PC-9 (cell line): ENCODE measurements at regions of chr1 and their contacts with region 1.

Region 1: GRCh38 chr1:212455803-212456528 is 23.2 kb downstream of the NENF start:
- DNase-seq: peak; percentile 55 to 80
- H3K4me3 ChIP-seq: no peak overlapping the region
- H3K27ac ChIP-seq: no peak overlapping the region
- H3K4me1 ChIP-seq: no peaks in the 10 kb centered on the region
- H3K27me3 ChIP-seq: no peaks in the 10 kb centered on the region
- CTCF ChIP-seq: peak; percentile 95

Region 2: DNA sequence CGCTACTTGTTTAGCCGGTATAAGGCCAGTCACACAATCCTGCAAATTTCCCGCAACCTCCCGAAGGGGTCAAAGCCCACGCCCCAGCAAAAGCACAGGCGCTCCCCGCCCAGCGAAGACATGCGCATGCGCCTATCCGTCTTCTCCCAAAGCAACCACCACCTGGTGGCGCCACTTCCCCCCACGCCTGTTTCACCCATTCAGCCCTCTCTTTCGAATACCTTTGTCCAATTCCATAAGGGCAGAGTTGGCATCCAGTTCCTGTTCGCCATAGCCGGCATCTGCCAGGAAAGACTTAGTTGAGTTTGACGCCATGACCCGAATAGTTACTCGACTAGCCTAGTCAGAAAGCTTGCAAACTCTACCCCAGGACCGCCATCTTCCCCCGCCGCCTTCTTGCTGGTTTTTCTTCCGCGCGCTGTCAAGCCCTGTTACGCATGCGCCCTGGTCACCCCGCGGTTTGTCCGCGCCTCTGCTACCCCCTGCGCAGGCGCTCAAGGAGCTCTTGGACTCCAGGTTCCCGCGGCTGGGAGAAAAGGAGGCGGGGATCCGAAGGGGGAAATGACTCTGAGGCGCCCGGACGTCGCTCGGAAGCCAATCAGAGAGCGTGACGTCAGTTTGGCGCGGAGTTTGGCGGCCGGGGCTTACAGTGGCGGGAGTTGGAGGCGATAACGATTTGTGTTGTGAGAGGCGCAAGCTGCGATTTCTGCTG is 420.7 kb before region 1 on chr1 and contains the starts of genes DTL and INTS7:
- CTCF ChIA-PET with region 1: interaction called, 8 read pairs
- POLR2A ChIA-PET with region 1: no interaction called
- intact Hi-C with region 1: loop called (anchors 10 kb)
- DNase-seq: peak; percentile 97 to 98
- H3K4me3 ChIP-seq: peak within 1 kb of the TSS; percentile 93
- H3K27ac ChIP-seq: peak within 1 kb of the TSS; percentile 55
- H3K4me1 ChIP-seq: peaks cover 50% of the 10 kb centered on the region
- H3K27me3 ChIP-seq: no peaks in the 10 kb centered on the region
- CTCF ChIP-seq: peak; percentile 81
- total RNA-seq, gene DTL: 22.5 TPM in 2 replicates
- total RNA-seq, gene INTS7: 18.4 and 24.7 TPM in 2 replicates

Region 3: GRCh38 chr1:212110617-212111016 is 345.3 kb before region 1 on chr1:
- CTCF ChIA-PET with region 1: no interaction called
- POLR2A ChIA-PET with region 1: no interaction called
- intact Hi-C with region 1: no loop called
- DNase-seq: no peak
- H3K4me3 ChIP-seq: no peak overlapping the region
- H3K27ac ChIP-seq: no peak overlapping the region
- H3K4me1 ChIP-seq: no peaks in the 10 kb centered on the region
- H3K27me3 ChIP-seq: no peaks in the 10 kb centered on the region
- CTCF ChIP-seq: no peak

Region 4: GRCh38 chr1:212368073-212368484 is 87.9 kb before region 1 on chr1:
- CTCF ChIA-PET with region 1: interaction called, 6 read pairs
- POLR2A ChIA-PET with region 1: no interaction called
- intact Hi-C with region 1: loop called (anchors 5 kb)
- DNase-seq: peak; percentile 41 to 67
- H3K4me3 ChIP-seq: no peak overlapping the region
- H3K27ac ChIP-seq: no peak overlapping the region
- H3K4me1 ChIP-seq: no peaks in the 10 kb centered on the region
- H3K27me3 ChIP-seq: no peaks in the 10 kb centered on the region
- CTCF ChIP-seq: peak; percentile 87

Region 5: DNA sequence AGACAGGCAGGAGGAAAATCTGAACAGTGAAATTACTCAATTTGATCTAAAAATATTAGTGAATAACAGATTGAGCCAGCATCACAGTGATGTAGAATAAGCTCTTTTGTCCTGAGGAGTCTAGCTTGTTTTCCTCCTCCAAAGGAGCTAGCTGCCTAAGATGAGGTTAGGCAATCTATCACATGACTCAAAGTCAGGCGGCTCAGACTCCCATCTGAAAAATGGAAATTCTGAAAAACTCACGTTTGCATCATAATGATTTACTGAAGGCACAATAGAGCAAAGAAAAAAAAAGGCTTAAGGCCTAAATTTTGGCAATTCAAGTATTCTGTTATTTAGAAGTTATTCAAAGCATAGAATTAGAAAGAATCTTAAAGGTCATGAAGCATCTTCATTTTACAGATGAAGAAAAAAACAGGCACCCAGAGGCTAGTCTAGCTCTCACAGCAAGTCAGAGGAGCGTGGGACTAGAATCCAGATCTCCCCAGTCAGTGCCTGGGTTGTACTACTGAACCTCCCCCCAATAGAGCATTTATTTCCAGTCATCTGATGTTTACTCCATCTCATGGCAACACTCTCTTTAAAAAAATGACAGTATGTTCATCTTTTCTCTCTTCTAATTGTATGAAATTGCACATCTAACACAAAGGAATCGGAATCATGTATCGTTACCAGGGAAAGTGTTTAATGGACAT is 90.1 kb after region 1 on chr1:
- CTCF ChIA-PET with region 1: no interaction called
- POLR2A ChIA-PET with region 1: no interaction called
- intact Hi-C with region 1: no loop called
- DNase-seq: no peak
- H3K4me3 ChIP-seq: no peak overlapping the region
- H3K27ac ChIP-seq: no peak overlapping the region
- H3K4me1 ChIP-seq: no peaks in the 10 kb centered on the region
- H3K27me3 ChIP-seq: no peaks in the 10 kb centered on the region
- CTCF ChIP-seq: no peak

Region 6: DNA sequence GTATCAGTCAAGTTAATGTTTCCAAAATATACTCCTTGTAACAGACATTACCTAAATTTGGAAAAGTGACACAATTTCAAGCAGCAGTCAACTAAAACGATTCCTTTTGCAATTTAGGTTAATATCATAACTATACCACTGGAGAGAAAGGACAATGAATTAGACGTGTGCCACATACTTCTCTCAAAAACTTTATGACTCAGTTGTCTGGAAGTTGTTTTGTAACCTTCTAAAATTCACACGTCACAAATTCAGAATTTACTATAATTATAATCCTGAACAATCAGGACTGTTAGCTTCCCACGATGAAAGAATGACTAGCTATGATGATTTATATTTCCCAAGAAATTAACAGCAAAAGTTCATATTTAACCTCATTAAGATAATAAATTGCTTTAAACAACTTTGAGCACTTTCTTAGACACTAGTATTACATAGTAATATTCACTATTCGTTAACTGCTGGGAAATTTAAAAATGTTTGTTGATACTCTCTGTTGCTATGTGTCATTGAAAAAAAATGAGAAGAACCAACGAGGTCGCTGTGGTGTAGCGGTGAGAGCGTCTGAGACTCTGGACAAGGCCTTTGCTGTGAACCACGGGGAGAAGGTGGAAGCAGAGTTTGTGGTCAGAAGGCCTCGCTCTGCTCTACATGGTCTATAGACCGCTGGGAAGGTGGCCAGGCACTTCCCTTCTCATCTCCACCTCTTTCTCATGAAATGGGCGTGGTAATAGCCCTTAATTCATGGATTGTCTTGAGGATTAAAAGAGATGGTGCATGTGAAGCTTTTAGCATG is 271.6 kb after region 1 on chr1:
- CTCF ChIA-PET with region 1: interaction called, 13 read pairs
- POLR2A ChIA-PET with region 1: no interaction called
- intact Hi-C with region 1: no loop called
- DNase-seq: no peak
- H3K4me3 ChIP-seq: no peak overlapping the region
- H3K27ac ChIP-seq: no peak overlapping the region
- H3K4me1 ChIP-seq: no peaks in the 10 kb centered on the region
- H3K27me3 ChIP-seq: no peaks in the 10 kb centered on the region
- CTCF ChIP-seq: no peak

Region 7: DNA sequence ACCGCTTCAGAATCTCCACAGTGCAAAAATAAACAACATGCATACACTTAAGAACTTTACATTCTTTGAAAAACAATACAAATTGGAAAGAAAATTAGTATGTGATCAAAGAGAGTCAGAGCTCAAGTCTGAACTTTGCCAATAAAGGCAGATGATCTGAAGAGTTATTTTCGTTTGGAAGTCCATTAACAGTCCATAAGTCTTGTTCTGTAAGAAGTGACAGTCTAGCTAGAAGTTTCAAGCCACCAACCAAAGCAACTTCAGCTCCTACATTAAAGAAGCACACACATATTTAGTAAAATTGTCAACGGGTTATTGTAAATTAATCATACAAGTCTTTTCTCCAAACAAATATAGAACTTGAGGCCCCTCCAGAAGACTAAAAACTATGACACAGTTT is 539.0 kb after region 1 on chr1:
- CTCF ChIA-PET with region 1: no interaction called
- POLR2A ChIA-PET with region 1: no interaction called
- intact Hi-C with region 1: loop called (anchors 1 kb)
- DNase-seq: no peak
- H3K4me3 ChIP-seq: no peak overlapping the region
- H3K27ac ChIP-seq: no peak overlapping the region
- H3K4me1 ChIP-seq: no peaks in the 10 kb centered on the region
- H3K27me3 ChIP-seq: no peaks in the 10 kb centered on the region
- CTCF ChIP-seq: no peak